SK-N-SH (cell line): ENCODE measurements at regions of chr2 and their contacts with region 1.

Region 1: DNA sequence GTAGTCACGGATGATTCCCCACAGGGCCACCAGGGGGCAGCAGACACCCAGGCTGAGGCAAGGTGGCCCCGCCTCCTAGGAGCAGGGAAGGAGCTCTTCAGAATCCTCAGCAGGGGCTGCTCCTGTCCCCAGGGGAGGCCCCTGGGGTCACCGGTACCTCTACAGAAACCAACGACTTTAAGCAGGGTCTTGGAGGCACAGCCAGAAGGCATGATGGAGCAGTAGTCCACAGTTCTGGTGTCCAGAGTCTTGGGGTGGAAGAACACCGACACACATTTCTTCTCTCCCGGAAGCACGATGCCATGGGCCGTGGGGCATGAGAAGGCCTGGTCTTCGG is 11.5 kb downstream of the CFAP65 start:
- DNase-seq: peak; percentile 93
- H3K4me3 ChIP-seq: peak overlapping the region in 1 of 2 experiments; percentile 49; a peak in 1 of 4 replicates
- H3K27ac ChIP-seq: no peak overlapping the region; a peak in 1 of 4 replicates
- H3K4me1 ChIP-seq: peaks cover 0 to 5% of the 10 kb centered on the region in 2 experiments; a peak in 1 of 4 replicates
- H3K27me3 ChIP-seq: peaks cover 18% of the 10 kb centered on the region; the same call in 1 of the 2 replicates
- CTCF ChIP-seq: peak; percentile 84
- EP300 ChIP-seq: no peak
- RAD21 ChIP-seq: peak; percentile 91

Region 2: GRCh38 chr2:218979846-218980734 is 49.7 kb before region 1 on chr2:
- CTCF ChIA-PET with region 1: interaction called, 37 read pairs
- POLR2A ChIA-PET with region 1: no interaction called
- DNase-seq: peak; percentile 88
- H3K4me3 ChIP-seq: peak overlapping the region; percentile 45 to 75
- H3K27ac ChIP-seq: peak overlapping the region in 1 of 2 experiments; percentile 69; a peak in 2 of 4 replicates
- H3K4me1 ChIP-seq: peaks cover 0 to 28% of the 10 kb centered on the region in 2 experiments; a peak in 1 of 4 replicates
- H3K27me3 ChIP-seq: peaks cover 28% of the 10 kb centered on the region
- CTCF ChIP-seq: peak; percentile 98
- EP300 ChIP-seq: no peak
- RAD21 ChIP-seq: peak; percentile 80

Region 3: DNA sequence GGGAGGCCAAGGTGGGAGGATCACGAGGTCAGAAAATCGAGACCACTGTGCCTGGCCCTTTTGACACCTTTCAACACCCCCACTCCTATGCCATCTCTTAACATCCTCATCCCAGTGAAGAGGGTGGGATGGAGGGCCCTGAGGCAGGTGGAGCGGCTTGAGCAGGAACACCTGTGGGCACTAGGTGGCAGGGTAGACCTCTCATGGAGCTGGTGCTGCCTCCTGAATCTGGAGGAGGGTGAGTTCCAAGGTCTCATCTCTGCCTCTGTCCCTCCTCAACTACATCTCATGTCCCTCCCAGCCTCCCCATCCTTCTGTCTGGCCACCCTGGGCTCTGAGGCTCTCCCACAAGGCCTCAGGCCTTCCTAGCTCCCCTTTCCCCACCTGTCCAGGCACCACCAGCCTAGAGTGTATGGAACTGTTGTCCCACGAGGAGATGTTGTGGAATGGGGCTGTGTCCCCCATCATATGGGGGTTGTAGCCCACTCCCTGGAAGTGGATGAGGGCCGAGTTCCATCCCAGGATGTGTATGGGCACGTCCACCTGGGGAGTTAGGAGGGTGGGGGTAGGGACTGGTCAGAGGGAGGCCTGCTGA is 19.5 kb before region 1 on chr2:
- CTCF ChIA-PET with region 1: interaction called, 258 read pairs
- POLR2A ChIA-PET with region 1: no interaction called
- DNase-seq: peak; percentile 64
- H3K4me3 ChIP-seq: no peak overlapping the region
- H3K27ac ChIP-seq: no peak overlapping the region
- H3K4me1 ChIP-seq: no peaks in the 10 kb centered on the region
- H3K27me3 ChIP-seq: no peaks in the 10 kb centered on the region
- CTCF ChIP-seq: peak; percentile 30
- EP300 ChIP-seq: no peak
- RAD21 ChIP-seq: peak; percentile 62

Region 4: GRCh38 chr2:219073413-219074129 is 43.8 kb after region 1 on chr2:
- CTCF ChIA-PET with region 1: interaction called, 31 read pairs
- POLR2A ChIA-PET with region 1: no interaction called
- DNase-seq: peak; percentile 68
- H3K4me3 ChIP-seq: no peak overlapping the region
- H3K27ac ChIP-seq: no peak overlapping the region
- H3K4me1 ChIP-seq: no peaks in the 10 kb centered on the region
- H3K27me3 ChIP-seq: no peaks in the 10 kb centered on the region
- CTCF ChIP-seq: peak; percentile 63
- EP300 ChIP-seq: no peak
- RAD21 ChIP-seq: peak; percentile 59

Region 5: GRCh38 chr2:219104107-219105035 is 74.6 kb after region 1 on chr2:
- CTCF ChIA-PET with region 1: interaction called, 34 read pairs
- POLR2A ChIA-PET with region 1: interaction called, 4 read pairs
- DNase-seq: peak; percentile 66
- H3K4me3 ChIP-seq: no peak overlapping the region; a peak in 1 of 4 replicates
- H3K27ac ChIP-seq: no peak overlapping the region
- H3K4me1 ChIP-seq: no peaks in the 10 kb centered on the region
- H3K27me3 ChIP-seq: no peaks in the 10 kb centered on the region
- CTCF ChIP-seq: peak; percentile 71
- EP300 ChIP-seq: no peak
- RAD21 ChIP-seq: peak; percentile 70

Region 6: DNA sequence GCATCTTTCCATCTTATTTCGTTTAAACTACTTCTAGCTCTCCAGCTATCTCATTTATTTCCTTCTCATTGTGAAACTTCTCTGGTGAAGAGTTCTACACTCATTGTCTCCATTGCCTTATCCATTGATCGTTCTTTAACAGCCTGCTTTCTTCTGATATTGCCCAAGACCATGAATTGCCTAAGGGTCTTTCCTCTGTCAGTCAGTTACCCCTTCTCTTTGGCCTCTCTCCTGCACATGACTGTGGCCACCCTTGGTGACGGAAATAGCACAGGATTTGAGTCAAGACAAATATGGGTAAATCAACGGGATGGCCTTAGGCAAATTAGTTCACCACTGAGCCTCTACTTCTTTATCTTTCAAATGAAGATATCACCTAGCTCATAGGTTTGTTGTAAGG is 104.2 kb after region 1 on chr2:
- CTCF ChIA-PET with region 1: interaction called, 21 read pairs
- POLR2A ChIA-PET with region 1: no interaction called
- DNase-seq: no peak
- H3K4me3 ChIP-seq: no peak overlapping the region
- H3K27ac ChIP-seq: no peak overlapping the region
- H3K4me1 ChIP-seq: no peaks in the 10 kb centered on the region
- H3K27me3 ChIP-seq: no peaks in the 10 kb centered on the region
- CTCF ChIP-seq: no peak
- EP300 ChIP-seq: no peak
- RAD21 ChIP-seq: no peak